ENCODE measurements at regions of chr20 and their contacts with region 1.

Region 1: DNA sequence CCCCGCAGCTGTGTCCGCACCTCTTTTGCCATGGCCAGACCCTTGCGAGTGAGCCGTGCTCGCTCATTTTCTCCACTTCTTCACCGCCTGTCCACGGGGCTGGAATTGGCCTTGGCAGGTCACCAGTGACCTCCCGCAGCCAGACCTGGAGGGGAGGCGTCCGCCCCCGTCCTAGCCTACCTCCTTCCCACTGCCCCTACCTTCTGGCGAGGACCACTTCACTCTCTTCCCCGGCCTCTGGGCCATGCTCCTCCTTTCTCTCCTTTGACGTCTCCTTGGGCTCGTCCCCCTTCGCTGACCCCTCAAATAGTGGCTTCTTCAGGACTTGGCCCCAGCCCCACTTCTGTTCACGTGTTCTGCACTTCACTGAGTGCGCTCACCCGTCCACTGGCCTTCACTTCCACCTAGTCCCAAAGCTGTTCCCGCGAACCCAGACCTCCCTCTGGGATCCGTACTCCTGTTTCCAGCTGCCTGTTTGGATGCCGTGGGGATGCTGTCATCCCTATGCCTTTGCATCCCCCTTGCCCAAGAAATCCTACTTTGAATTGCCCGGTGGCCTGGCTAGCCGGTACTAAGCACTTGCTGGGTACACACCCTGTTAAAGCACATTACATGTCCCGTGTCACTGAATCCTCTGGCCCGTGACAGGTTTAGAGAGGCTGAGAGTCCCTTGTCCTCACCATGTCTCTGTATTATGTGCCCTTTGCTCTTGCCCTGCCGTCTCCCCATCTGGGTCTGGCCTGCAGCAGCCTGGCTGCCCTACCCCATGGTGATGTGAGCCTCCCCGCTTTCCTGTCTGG is 33.0 kb downstream of the SPATA2 start:
- DNase-seq: no peak
- H3K4me3 ChIP-seq: no peak overlapping the region
- H3K27ac ChIP-seq: no peak overlapping the region
- H3K4me1 ChIP-seq: no peaks in the 10 kb centered on the region
- H3K27me3 ChIP-seq: no peaks in the 10 kb centered on the region
- CTCF ChIP-seq: no peak
- POLR2A ChIP-seq: no peak

Region 2: GRCh38 chr20:49768204-49769047 is 113.9 kb before region 1 on chr20:
- CTCF ChIA-PET with region 1: no interaction called
- POLR2A ChIA-PET with region 1: no interaction called
- dilution Hi-C with region 1: no loop called
- intact Hi-C with region 1: no loop called
- DNase-seq: peak; percentile 92
- H3K4me3 ChIP-seq: no peak overlapping the region
- H3K27ac ChIP-seq: peak overlapping the region; percentile 39
- H3K4me1 ChIP-seq: peaks cover 23% of the 10 kb centered on the region
- H3K27me3 ChIP-seq: no peaks in the 10 kb centered on the region
- CTCF ChIP-seq: no peak
- POLR2A ChIP-seq: no peak

Region 3: GRCh38 chr20:49835031-49835430 is 47.3 kb before region 1 on chr20:
- CTCF ChIA-PET with region 1: no interaction called
- POLR2A ChIA-PET with region 1: no interaction called
- dilution Hi-C with region 1: no loop called
- intact Hi-C with region 1: loop called (anchors 1 kb)
- DNase-seq: no peak
- H3K4me3 ChIP-seq: no peak overlapping the region
- H3K27ac ChIP-seq: no peak overlapping the region
- H3K4me1 ChIP-seq: no peaks in the 10 kb centered on the region
- H3K27me3 ChIP-seq: no peaks in the 10 kb centered on the region
- CTCF ChIP-seq: no peak
- POLR2A ChIP-seq: no peak